Activated CD4-positive, alpha-beta memory T cell treated with anti-CD3 and anti-CD28 coated beads for 36 hours (primary cell): ENCODE measurements at regions of chr6 and their contacts with region 1.

Region 1: GRCh38 chr6:136289579-136290409 is at the start of gene BCLAF1:
- DNase-seq: peak; percentile 99
- H3K4me3 Mint-ChIP-seq: peak within 1 kb of the TSS; percentile 94
- H3K27ac Mint-ChIP-seq: peak within 1 kb of the TSS; percentile 100
- H3K4me1 Mint-ChIP-seq: peaks cover 39% of the 10 kb centered on the region
- H3K27me3 Mint-ChIP-seq: no peaks in the 10 kb centered on the region
- total RNA-seq, gene BCLAF1: 103 to 107 TPM

Region 2: GRCh38 chr6:135054569-135055498 is 1235.0 kb before region 1 on chr6 and contains the start of gene HBS1L:
- CTCF ChIA-PET with region 1: no interaction called
- POLR2A ChIA-PET with region 1: no interaction called
- intact Hi-C with region 1: loop called (anchors 10 kb)
- DNase-seq: peak; percentile 98
- H3K4me3 Mint-ChIP-seq: peak within 1 kb of the TSS; percentile 92
- H3K27ac Mint-ChIP-seq: peak within 1 kb of the TSS; percentile 96
- H3K4me1 Mint-ChIP-seq: peaks cover 34% of the 10 kb centered on the region
- H3K27me3 Mint-ChIP-seq: no peaks in the 10 kb centered on the region
- total RNA-seq, gene HBS1L: 117 to 123 TPM

Region 3: GRCh38 chr6:135880066-135880972 is 409.5 kb before region 1 on chr6:
- CTCF ChIA-PET with region 1: no interaction called
- POLR2A ChIA-PET with region 1: no interaction called
- intact Hi-C with region 1: loop called (anchors 5 kb)
- DNase-seq: peak; percentile 65
- H3K4me3 Mint-ChIP-seq: peak overlapping the region; percentile 72
- H3K27ac Mint-ChIP-seq: peak overlapping the region; percentile 94
- H3K4me1 Mint-ChIP-seq: peaks cover 35% of the 10 kb centered on the region
- H3K27me3 Mint-ChIP-seq: no peaks in the 10 kb centered on the region

Region 4: GRCh38 chr6:136262940-136263339 is 26.9 kb before region 1 on chr6:
- CTCF ChIA-PET with region 1: no interaction called
- POLR2A ChIA-PET with region 1: interaction called, 13 read pairs
- intact Hi-C with region 1: no loop called
- DNase-seq: no peak
- H3K4me3 Mint-ChIP-seq: no peak overlapping the region
- H3K27ac Mint-ChIP-seq: peak overlapping the region; percentile 13
- H3K4me1 Mint-ChIP-seq: peaks cover 27% of the 10 kb centered on the region
- H3K27me3 Mint-ChIP-seq: no peaks in the 10 kb centered on the region

Region 5: GRCh38 chr6:136550330-136551071 is 260.7 kb after region 1 on chr6 and contains the start of gene MAP7:
- CTCF ChIA-PET with region 1: interaction called, 9 read pairs
- POLR2A ChIA-PET with region 1: interaction called, 4 read pairs
- intact Hi-C with region 1: loop called (anchors 1 kb)
- DNase-seq: peak; percentile 80
- H3K4me3 Mint-ChIP-seq: peak within 1 kb of the TSS; percentile 58
- H3K27ac Mint-ChIP-seq: no peak within 1 kb of the TSS
- H3K4me1 Mint-ChIP-seq: peaks cover 1% of the 10 kb centered on the region
- H3K27me3 Mint-ChIP-seq: peaks cover 23% of the 10 kb centered on the region
- total RNA-seq, gene MAP7: 1.2 to 1.3 TPM